Aorta (tissue), 5 donors: ENCODE measurements at regions of chr15 and their contacts with region 1.

Region 1: DNA sequence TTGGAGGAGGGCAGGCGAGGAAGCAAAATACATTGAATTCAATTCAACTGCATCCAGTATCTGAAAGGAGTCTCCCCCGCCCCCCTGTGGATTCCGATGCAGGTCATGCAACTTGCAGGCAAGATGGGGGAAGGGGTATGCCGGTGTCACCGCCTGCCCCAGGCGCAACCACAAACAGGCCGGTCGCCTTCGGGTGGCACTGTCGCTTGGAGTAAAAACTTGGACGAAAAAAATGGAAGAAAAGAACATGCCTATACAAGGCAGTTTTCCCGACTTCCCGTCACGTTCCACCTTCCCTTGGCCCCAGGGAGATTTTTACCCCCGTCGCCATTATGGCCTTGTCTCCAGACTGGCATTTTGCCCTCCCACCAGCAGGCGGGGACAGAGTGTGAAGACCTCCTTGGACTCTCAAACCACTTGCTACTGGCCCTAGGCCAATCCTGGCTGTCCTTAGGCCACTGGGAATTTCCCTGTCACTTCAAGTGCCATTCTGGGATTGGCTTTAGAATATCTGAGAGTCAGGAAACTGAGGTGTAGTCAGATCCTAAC is 1.6 kb upstream of the NTRK3 start:
- DNase-seq: peak; percentile 81 to 87
- ATAC-seq: peak; percentile 61
- H3K4me3 ChIP-seq: peak overlapping the region; percentile 80 to 85
- H3K27ac ChIP-seq: peak overlapping the region; percentile 11 to 48
- H3K4me1 ChIP-seq: no peaks in the 10 kb centered on the region
- H3K27me3 ChIP-seq: no peaks in the 10 kb centered on the region

Region 2: DNA sequence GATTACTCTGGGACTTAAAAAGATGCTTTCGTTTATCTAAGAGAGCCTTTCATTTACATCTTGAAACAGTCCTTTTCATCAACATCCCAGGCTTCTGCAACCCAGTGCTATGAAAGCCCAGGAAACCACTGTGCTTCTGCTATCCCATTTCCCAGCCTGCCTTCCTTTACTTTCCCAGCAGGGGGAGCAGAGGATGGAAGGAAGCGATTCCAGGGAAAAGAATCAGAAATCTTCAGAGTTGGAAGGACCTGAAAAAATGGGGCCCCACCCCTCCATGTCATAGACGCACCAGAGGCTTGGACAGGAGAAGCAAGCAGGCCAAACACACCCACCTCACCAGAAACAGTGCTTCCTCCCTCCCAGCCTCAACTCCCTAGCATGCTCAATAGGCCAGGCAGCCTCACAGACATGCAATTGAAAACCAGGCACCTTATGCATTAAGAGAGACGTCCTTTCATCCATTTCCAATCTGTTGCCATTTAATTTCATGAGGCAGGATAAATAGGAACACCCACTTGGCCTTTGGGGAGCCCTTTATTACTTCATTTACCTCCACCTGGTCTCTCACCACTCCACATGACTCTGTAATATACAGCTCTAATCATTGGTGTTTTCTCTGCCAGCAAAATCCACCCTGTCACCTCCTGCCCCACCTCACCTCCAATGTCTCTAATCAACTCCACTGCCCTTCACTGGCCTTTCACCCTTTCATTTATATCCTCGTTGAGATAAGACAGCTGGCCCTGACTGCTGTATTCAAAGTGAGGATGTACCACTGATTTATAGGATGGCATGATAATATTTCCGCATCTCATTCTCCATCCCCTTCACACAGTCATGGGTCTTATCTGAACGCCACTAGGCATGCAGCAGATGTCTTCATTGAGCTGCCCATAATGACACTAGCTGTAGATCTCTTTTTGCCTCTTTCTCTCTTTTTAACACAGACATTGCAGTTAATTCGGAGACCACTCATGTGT is 585.6 kb before region 1 on chr15:
- intact Hi-C with region 1: loop called in 1 of 2 experiments (anchors 5 kb)
- DNase-seq: peak in 1 of 2 donors; percentile 50
- ATAC-seq: peak; percentile 62
- H3K4me3 ChIP-seq: no peak overlapping the region
- H3K27ac ChIP-seq: no peak overlapping the region
- H3K4me1 ChIP-seq: no peaks in the 10 kb centered on the region
- H3K27me3 ChIP-seq: no peaks in the 10 kb centered on the region

Region 3: GRCh38 chr15:87752250-87752951 is 505.8 kb before region 1 on chr15:
- intact Hi-C with region 1: loop called in 1 of 2 experiments (anchors 10 kb)
- DNase-seq: no peak
- ATAC-seq: peak; percentile 44
- H3K4me3 ChIP-seq: no peak overlapping the region
- H3K27ac ChIP-seq: peak overlapping the region in 1 of 2 donors; percentile 22
- H3K4me1 ChIP-seq: peaks cover 0 to 2% of the 10 kb centered on the region in 2 donors
- H3K27me3 ChIP-seq: no peaks in the 10 kb centered on the region

Region 4: DNA sequence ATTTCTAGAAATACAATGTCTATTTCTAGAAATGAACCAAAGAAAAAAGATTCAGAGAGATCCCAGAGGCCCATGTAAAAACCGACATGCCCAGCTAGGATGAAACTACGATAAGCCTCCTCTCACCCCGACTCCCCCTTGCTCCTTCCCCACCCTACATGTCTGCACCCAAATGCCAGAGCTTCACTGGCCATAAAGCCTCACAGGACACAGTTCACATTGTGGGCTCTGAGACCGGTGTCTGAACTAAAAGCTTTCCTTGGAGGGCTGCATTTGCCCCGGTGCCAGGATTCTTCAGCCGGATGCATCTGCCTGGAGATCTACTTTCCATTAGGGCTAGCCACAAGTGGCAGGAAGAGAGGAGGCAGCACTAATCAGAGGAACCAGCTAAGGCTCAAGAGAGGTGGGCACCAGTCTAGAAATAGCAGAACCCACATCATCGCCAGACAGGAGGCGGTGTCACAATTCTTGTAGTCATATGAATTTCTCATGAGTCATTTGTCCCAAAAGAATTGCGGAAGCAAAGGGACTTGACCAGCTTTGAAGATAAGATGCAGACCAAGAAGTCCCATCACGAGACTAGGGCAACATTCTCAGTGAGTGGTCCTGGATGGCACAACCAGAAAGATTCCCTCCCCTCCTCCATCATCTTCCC is 355.3 kb before region 1 on chr15:
- intact Hi-C with region 1: loop called in 1 of 2 experiments (anchors 10 kb)
- DNase-seq: peak; percentile 80 to 84
- ATAC-seq: peak; percentile 87
- H3K4me3 ChIP-seq: no peak overlapping the region
- H3K27ac ChIP-seq: peak overlapping the region; percentile 22 to 73
- H3K4me1 ChIP-seq: no peaks in the 10 kb centered on the region
- H3K27me3 ChIP-seq: no peaks in the 10 kb centered on the region

Region 5: DNA sequence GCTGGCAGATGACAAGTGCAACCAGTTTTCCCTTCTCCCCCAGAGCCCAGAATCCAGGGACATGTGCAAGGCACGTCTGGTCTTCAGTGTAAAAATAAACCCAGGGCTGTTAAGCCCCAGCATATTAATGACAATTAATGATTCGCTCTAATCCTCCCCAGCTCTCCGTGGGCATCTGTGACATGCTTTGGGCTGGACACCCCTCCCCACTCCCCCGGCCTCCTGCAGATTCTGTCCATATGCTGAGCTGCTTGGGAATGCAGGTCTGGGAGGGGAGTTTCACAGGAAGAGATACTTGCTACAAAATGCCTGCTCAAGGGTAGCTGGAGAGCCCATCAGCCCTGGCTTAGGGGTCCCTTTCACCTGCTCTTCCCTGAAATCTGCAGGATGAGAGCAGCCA is 41.3 kb after region 1 on chr15:
- intact Hi-C with region 1: no loop called
- DNase-seq: no peak
- ATAC-seq: no peak
- H3K4me3 ChIP-seq: no peak overlapping the region
- H3K27ac ChIP-seq: no peak overlapping the region
- H3K4me1 ChIP-seq: no peaks in the 10 kb centered on the region
- H3K27me3 ChIP-seq: no peaks in the 10 kb centered on the region